ENCODE measurements at regions of chr20 and their contacts with region 1.

Region 1: GRCh38 chr20:51306503-51307358 is 235.8 kb downstream of the NFATC2 start:
- H3K4me3 ChIP-seq: no peak overlapping the region
- H3K27ac ChIP-seq: no peak overlapping the region
- H3K4me1 ChIP-seq: no peaks in the 10 kb centered on the region
- CTCF ChIP-seq: peak; percentile 92

Region 2: GRCh38 chr20:50980851-50981713 is 325.6 kb before region 1 on chr20:
- CTCF ChIA-PET with region 1: interaction called, 243 read pairs
- POLR2A ChIA-PET with region 1: no interaction called
- H3K4me3 ChIP-seq: no peak overlapping the region
- H3K27ac ChIP-seq: no peak overlapping the region
- H3K4me1 ChIP-seq: no peaks in the 10 kb centered on the region
- CTCF ChIP-seq: peak; percentile 27; the same call in 1 of the 2 replicates

Region 3: GRCh38 chr20:50992733-50993457 is 313.8 kb before region 1 on chr20:
- CTCF ChIA-PET with region 1: interaction called, 243 read pairs
- POLR2A ChIA-PET with region 1: no interaction called
- H3K4me3 ChIP-seq: no peak overlapping the region
- H3K27ac ChIP-seq: no peak overlapping the region
- H3K4me1 ChIP-seq: no peaks in the 10 kb centered on the region
- CTCF ChIP-seq: peak; percentile 59

Region 4: DNA sequence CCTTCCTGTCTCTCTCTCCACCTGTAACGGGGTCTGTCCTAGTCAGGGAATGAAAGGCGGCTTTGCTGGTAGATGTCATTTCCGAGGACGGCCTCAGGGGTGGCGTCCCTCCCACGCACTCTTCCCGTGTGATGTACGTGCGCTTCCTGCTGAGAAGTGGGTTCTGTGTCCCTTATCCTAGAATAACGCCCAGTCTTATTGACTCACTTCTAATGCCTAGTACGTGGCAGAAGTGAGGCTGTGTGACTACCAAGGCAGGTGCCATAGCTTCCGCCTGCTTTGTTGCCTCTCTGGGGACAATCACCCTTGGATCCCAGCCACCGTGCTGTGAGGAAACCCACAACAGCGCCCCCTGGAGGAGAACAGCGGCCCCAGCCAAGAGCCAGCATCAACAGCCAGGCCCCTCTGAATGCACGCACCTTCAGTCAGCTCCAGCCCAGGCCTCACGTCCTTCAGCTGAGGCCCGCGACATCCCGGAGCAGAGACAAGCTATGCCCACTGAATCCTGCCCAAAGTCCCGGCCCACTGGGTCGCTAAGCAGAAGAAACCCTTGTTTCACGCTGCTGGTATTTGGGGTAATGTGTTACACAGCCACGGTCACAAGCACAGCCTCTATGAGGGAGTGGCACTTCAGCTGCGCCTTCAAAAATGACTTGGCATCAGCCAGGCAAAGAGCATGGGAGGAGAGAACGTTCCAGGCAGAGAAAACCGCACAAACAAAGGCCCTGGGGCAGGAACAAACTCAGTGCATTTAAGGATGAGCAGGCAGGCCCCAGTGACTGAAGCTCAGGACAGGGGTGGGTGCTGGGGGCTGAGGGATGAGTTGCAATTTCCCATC is 11.5 kb after region 1 on chr20:
- CTCF ChIA-PET with region 1: interaction called, 42 read pairs
- POLR2A ChIA-PET with region 1: no interaction called
- H3K4me3 ChIP-seq: no peak overlapping the region
- H3K27ac ChIP-seq: no peak overlapping the region
- H3K4me1 ChIP-seq: no peaks in the 10 kb centered on the region
- CTCF ChIP-seq: no peak

Region 5: DNA sequence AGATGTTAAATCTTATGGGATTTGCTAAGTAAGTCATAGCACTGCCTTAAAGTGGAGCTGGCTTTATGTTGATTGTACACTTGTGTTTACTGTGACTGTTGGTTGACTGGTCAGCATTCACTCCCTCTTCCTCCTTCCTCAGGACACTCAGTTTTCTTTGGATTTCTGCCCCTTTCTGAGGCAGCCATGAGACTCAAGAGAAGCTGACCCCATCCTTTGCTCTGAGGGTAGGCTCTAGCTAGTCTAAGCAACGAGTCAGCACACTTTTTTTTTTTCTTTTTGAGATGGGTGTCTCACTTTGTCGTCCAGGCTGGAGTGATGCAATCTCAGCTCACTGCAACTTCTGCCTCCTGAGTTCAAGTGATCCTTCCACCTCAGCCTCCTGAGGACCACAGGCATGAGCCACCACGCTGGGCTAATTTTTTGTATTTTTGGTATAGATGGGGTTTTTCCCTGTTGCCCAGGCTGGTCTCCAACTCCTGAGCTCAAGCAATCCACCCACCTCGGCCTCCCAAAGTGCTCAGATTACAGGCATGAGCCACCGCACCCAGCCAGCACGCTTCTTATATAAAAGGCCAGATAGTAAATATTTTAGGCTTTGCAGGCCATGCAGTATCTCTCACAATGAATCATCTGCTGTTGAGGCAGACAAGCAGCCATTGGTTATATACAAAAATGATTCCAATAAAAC is 44.4 kb after region 1 on chr20:
- CTCF ChIA-PET with region 1: interaction called, 10 read pairs
- POLR2A ChIA-PET with region 1: no interaction called
- H3K4me3 ChIP-seq: no peak overlapping the region
- H3K27ac ChIP-seq: no peak overlapping the region
- H3K4me1 ChIP-seq: no peaks in the 10 kb centered on the region
- CTCF ChIP-seq: no peak

Region 6: GRCh38 chr20:51500311-51500710 is 193.6 kb after region 1 on chr20:
- CTCF ChIA-PET with region 1: no interaction called
- POLR2A ChIA-PET with region 1: no interaction called
- H3K4me3 ChIP-seq: no peak overlapping the region
- H3K27ac ChIP-seq: no peak overlapping the region
- H3K4me1 ChIP-seq: peaks cover 3% of the 10 kb centered on the region; the same call in 1 of the 2 replicates
- CTCF ChIP-seq: no peak

Region 7: GRCh38 chr20:51595058-51595532 is 288.4 kb after region 1 on chr20:
- CTCF ChIA-PET with region 1: interaction called, 10 read pairs
- POLR2A ChIA-PET with region 1: no interaction called
- H3K4me3 ChIP-seq: no peak overlapping the region
- H3K27ac ChIP-seq: no peak overlapping the region
- H3K4me1 ChIP-seq: no peaks in the 10 kb centered on the region
- CTCF ChIP-seq: peak; percentile 75